HAP-1 (cell line): ENCODE measurements at regions of chr13 and their contacts with region 1.

Region 1: DNA sequence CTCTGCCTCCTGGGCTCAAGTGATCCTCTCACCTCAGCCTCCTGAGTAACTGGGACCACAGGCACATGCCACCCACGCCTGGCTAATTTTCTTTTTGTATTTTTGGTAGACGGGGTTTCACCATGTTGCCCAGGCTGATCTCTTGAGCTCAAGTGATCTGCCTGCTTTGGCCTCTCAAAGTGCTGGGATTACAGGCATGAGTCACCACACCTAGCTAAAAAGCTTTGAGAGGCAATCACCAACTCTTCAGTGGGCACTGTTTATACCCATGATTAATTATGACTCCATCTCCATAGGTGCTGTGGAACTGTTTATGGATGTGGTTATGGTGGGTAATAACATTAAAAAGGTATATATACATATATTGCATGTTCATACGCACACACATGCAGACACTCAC is 7.5 kb upstream of the RBM26 start:
- DNase-seq: no peak
- H3K4me3 ChIP-seq: no peak overlapping the region
- H3K4me1 ChIP-seq: peaks cover under 1% of the 10 kb centered on the region; the same call in 1 of the 2 replicates
- H3K27me3 ChIP-seq: no peaks in the 10 kb centered on the region

Region 2: GRCh38 chr13:79533781-79534400 is 120.4 kb after region 1 on chr13:
- in situ Hi-C with region 1: loop called (anchors 10 kb)
- DNase-seq: no peak
- H3K4me3 ChIP-seq: no peak overlapping the region
- H3K4me1 ChIP-seq: no peaks in the 10 kb centered on the region; the same call in 1 of the 2 replicates
- H3K27me3 ChIP-seq: no peaks in the 10 kb centered on the region

Region 3: GRCh38 chr13:79581870-79582315 is 168.4 kb after region 1 on chr13:
- in situ Hi-C with region 1: no loop called
- DNase-seq: no peak
- H3K4me3 ChIP-seq: no peak overlapping the region
- H3K4me1 ChIP-seq: no peaks in the 10 kb centered on the region
- H3K27me3 ChIP-seq: no peaks in the 10 kb centered on the region

Region 4: GRCh38 chr13:79749984-79750551 is 336.5 kb after region 1 on chr13:
- in situ Hi-C with region 1: no loop called
- DNase-seq: no peak
- H3K4me3 ChIP-seq: no peak overlapping the region
- H3K4me1 ChIP-seq: no peaks in the 10 kb centered on the region
- H3K27me3 ChIP-seq: no peaks in the 10 kb centered on the region

Region 5: DNA sequence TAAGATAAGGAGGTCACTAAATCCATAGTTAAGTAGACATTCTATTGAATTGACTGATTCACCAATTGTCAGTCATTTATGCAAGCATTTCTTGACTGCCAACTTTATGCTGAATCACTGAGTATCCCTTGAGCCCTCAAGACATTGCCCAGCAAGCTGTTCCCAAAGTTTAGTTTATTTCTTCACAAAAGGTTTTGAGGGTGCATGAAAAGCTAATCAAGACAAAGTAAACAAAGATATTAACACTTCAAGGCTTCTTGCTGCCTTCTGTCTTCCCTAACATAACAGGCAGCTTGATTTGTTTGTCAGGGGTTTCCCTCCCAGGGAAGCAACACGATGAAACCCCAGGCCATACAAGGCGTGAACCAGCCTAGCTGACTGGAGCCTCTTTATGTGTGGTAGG is 553.0 kb after region 1 on chr13:
- in situ Hi-C with region 1: no loop called
- DNase-seq: peak; percentile 64 to 87
- H3K4me3 ChIP-seq: no peak overlapping the region
- H3K4me1 ChIP-seq: peaks cover 4% of the 10 kb centered on the region; the same call in 1 of the 2 replicates
- H3K27me3 ChIP-seq: no peaks in the 10 kb centered on the region